Activated CD4-positive, alpha-beta memory T cell treated with anti-CD3 and anti-CD28 coated beads for 36 hours (primary cell): ENCODE measurements at regions of chr22 and their contacts with region 1.

Region 1: GRCh38 chr22:31290494-31291471 is 1.5 kb downstream of the PIK3IP1 start:
- DNase-seq: peak; percentile 96
- H3K4me3 Mint-ChIP-seq: peak overlapping the region; percentile 98
- H3K27ac Mint-ChIP-seq: peak overlapping the region; percentile 100
- H3K4me1 Mint-ChIP-seq: peaks cover 63% of the 10 kb centered on the region
- H3K27me3 Mint-ChIP-seq: no peaks in the 10 kb centered on the region

Region 2: DNA sequence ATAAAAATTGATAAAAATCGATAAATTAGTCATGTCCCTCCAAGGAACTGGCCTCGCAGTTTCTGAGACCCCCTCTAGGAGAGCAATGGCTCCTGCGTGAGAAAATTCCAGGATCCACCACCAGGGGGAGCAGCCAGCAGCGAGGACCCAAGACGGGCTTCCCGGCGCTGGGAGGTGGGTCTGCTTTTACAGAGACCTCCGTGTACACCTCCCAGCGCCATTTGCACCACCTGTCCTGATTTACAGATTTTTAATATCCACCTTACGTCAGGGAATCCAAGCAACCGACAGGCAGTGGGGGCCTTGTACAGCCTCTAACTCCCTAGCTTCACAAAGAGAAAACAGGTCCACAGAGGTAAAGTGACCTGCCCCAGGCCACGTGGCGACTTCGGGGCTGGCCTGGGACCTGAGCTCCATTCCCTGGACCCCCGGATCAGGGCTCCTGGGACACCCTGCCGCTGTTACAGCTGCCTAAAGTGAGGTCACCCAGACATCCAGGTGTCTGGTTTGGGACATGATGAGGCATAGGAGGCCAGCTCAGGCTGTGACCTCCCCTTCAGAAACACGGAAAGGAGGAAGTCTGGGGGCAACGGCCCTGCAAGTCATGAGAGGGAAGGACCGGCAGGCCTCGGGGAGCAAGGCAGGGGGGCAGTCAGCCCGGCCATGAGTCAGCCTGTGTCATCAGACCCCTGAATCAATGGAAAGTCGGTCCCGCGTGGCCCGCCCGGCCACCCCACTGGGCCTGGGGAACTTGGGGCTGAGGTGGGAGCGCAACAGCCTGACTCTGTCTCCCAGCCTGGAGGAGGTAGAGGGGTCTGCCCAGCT is 1027.7 kb before region 1 on chr22:
- CTCF ChIA-PET with region 1: no interaction called
- POLR2A ChIA-PET with region 1: no interaction called
- intact Hi-C with region 1: no loop called
- DNase-seq: peak; percentile 86
- H3K4me3 Mint-ChIP-seq: peak overlapping the region; percentile 71
- H3K27ac Mint-ChIP-seq: peak overlapping the region; percentile 69
- H3K4me1 Mint-ChIP-seq: peaks cover 34% of the 10 kb centered on the region
- H3K27me3 Mint-ChIP-seq: no peaks in the 10 kb centered on the region

Region 3: DNA sequence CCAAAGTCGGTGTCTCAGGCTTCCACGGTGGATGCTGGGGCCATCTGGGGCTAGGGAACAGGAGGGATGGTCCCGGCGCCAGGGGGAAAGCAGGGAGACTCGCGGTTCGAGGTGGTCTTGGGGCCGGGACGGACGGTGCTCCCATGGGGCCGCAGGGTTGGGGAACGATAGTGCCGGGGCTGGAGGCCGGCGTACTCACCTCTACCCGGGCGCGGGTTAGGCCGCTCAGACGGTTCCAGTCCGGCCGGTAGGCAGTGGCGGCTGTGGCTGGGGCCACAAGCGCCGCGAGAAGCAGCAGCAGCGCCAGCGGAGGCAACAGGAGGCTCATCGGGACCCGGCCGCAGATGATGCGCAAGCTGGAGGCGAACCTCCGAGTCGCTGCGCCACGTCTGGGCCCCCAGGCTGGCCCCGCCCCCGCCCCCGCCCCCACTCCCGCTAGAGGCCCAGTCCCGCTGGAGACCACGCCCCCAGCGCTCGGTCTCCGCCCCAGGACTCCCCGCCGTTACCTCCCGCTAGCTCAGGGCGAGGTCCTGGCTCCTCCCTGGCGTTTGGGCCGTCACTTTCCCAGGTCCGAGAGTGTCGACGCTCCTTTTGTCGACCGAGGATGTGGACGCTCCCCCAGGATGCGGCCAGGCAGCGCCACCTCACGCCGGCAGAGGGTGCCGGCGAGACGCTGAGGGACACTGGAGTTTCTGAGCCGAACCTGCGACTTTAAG is 183.4 kb before region 1 on chr22 and contains the start of gene SELENOM:
- CTCF ChIA-PET with region 1: interaction called, 8 read pairs
- POLR2A ChIA-PET with region 1: interaction called, 3 read pairs
- intact Hi-C with region 1: loop called (anchors 5 kb)
- DNase-seq: peak; percentile 94
- H3K4me3 Mint-ChIP-seq: peak within 1 kb of the TSS; percentile 80
- H3K27ac Mint-ChIP-seq: peak within 1 kb of the TSS; percentile 70
- H3K4me1 Mint-ChIP-seq: peaks cover 22% of the 10 kb centered on the region
- H3K27me3 Mint-ChIP-seq: no peaks in the 10 kb centered on the region
- total RNA-seq, gene SELENOM: 14.1 to 14.3 TPM

Region 4: GRCh38 chr22:31230871-31231621 is 59.7 kb before region 1 on chr22:
- CTCF ChIA-PET with region 1: no interaction called
- POLR2A ChIA-PET with region 1: no interaction called
- intact Hi-C with region 1: no loop called
- DNase-seq: peak; percentile 48
- H3K4me3 Mint-ChIP-seq: no peak overlapping the region
- H3K27ac Mint-ChIP-seq: peak overlapping the region; percentile 0
- H3K4me1 Mint-ChIP-seq: peaks cover 38% of the 10 kb centered on the region
- H3K27me3 Mint-ChIP-seq: no peaks in the 10 kb centered on the region

Region 5: GRCh38 chr22:31272522-31273446 is 18.0 kb before region 1 on chr22:
- CTCF ChIA-PET with region 1: interaction called, 55 read pairs
- POLR2A ChIA-PET with region 1: interaction called, 31 read pairs
- intact Hi-C with region 1: no loop called
- DNase-seq: peak; percentile 67
- H3K4me3 Mint-ChIP-seq: no peak overlapping the region
- H3K27ac Mint-ChIP-seq: peak overlapping the region; percentile 40
- H3K4me1 Mint-ChIP-seq: peaks cover 24% of the 10 kb centered on the region
- H3K27me3 Mint-ChIP-seq: no peaks in the 10 kb centered on the region

Region 6: GRCh38 chr22:31313366-31314147 is 22.8 kb after region 1 on chr22:
- CTCF ChIA-PET with region 1: interaction called, 92 read pairs
- POLR2A ChIA-PET with region 1: interaction called, 8 read pairs
- intact Hi-C with region 1: no loop called
- DNase-seq: peak; percentile 79
- H3K4me3 Mint-ChIP-seq: no peak overlapping the region
- H3K27ac Mint-ChIP-seq: no peak overlapping the region
- H3K4me1 Mint-ChIP-seq: peaks cover 23% of the 10 kb centered on the region
- H3K27me3 Mint-ChIP-seq: no peaks in the 10 kb centered on the region

Region 7: DNA sequence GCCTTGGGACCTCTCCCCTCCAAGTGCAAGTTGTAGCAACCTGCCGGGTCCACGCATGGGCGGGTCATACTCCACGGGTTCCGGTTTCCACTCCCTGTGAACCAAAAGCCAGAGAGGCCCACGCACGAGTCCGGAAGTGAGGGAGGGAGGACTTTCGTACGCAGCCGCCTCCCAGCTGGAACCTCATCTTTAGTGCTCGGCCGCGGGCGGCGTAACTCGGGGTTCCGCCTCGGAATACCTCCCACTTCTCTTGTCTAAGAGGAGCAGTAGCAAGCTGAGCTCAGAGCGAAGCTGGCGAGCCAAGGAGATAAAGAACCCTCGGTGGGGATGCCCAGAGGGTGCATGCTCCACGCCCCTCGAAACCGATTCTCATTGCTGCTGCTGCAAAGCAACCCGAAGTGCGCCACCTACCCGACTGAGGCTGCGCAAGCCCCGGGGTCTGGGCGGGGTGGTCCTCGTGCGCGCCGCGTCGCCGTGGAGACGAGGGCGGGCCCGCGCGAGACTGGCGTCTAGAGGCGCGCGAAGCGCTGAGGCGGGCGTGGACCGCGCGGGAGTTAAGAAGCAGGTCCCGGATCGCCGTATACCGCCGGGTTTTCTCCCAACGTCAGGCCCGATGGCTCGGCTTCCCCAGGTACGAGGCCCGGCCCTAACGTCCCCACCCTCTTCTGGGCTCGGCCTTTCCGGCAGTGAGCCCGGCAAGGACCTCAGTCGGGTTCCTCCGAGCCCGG is 205.4 kb after region 1 on chr22 and contains the start of gene SFI1:
- CTCF ChIA-PET with region 1: no interaction called
- POLR2A ChIA-PET with region 1: no interaction called
- intact Hi-C with region 1: loop called (anchors 2 kb)
- DNase-seq: peak; percentile 96
- H3K4me3 Mint-ChIP-seq: peak within 1 kb of the TSS; percentile 92
- H3K27ac Mint-ChIP-seq: peak within 1 kb of the TSS; percentile 94
- H3K4me1 Mint-ChIP-seq: peaks cover 50% of the 10 kb centered on the region
- H3K27me3 Mint-ChIP-seq: no peaks in the 10 kb centered on the region
- total RNA-seq, gene SFI1: 227 to 240 TPM